ENCODE measurements at regions of chr16 and their contacts with region 1.

Region 1: DNA sequence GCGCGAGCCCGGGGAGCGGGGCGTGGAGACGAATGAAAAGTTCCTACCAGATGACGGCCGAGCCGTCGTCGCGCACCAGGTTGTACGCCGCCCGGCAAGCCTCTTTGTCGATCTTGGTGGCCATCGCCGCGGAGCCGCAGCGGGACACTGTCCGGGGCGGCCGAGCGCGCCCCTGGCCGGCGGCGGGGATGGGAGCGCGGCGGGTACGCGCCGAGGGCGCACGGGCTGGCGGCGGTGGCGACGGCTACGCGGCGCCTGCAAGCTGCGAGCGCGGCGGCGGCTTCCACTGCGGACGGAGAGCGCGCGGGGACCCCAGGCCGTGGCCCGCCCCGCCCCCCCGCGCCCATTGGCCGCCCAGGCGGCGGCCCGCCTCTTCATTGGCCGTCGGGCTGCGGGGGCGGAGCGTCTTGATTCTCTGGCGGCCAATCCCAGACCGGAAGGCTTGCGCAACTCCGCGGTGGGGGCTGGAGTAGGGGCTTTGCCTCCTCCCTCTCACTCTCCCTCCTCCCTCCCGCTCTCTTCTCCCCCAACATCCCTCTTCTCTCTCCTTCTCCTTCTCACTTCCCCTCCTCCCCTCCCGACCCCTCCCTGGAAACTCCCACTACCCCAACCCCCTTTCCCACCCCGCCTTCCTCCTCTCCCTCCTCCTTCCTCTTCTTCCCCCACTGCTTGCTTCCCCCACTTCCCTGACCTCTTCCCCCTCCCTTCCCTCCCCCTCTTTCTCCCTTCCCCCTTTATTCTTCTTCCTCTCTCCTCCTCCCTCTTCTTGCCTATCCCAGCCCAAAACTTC is at the start of gene COTL1:
- DNase-seq: peak; percentile 83
- H3K4me3 ChIP-seq: peak within 1 kb of the TSS; percentile 86
- H3K27me3 ChIP-seq: no peaks in the 10 kb centered on the region
- CTCF ChIP-seq: no peak
- polyA plus RNA-seq, gene COTL1: 161 and 166 TPM in 2 replicates

Region 2: GRCh38 chr16:84504420-84505248 is 113.4 kb before region 1 on chr16 and contains the start of gene MEAK7:
- CTCF ChIA-PET with region 1: interaction called, 169 read pairs
- POLR2A ChIA-PET with region 1: no interaction called
- DNase-seq: peak; percentile 83
- H3K4me3 ChIP-seq: peak within 1 kb of the TSS; percentile 67
- H3K27me3 ChIP-seq: no peaks in the 10 kb centered on the region
- CTCF ChIP-seq: no peak
- polyA plus RNA-seq, gene MEAK7: 29.1 and 41.2 TPM in 2 replicates

Region 3: GRCh38 chr16:84518748-84519341 is 99.1 kb before region 1 on chr16:
- CTCF ChIA-PET with region 1: interaction called, 169 read pairs
- POLR2A ChIA-PET with region 1: no interaction called
- DNase-seq: no peak
- H3K4me3 ChIP-seq: no peak overlapping the region
- H3K27me3 ChIP-seq: no peaks in the 10 kb centered on the region
- CTCF ChIP-seq: no peak

Region 4: GRCh38 chr16:84633622-84634021 is 15.6 kb after region 1 on chr16:
- CTCF ChIA-PET with region 1: interaction called, 13 read pairs
- POLR2A ChIA-PET with region 1: no interaction called
- DNase-seq: no peak
- H3K4me3 ChIP-seq: no peak overlapping the region
- H3K27me3 ChIP-seq: no peaks in the 10 kb centered on the region
- CTCF ChIP-seq: no peak

Region 5: GRCh38 chr16:84647828-84648594 is 30.0 kb after region 1 on chr16 and contains the start of gene KLHL36:
- CTCF ChIA-PET with region 1: interaction called, 13 read pairs
- POLR2A ChIA-PET with region 1: interaction called, 3 read pairs
- DNase-seq: no peak
- H3K4me3 ChIP-seq: peak within 1 kb of the TSS; percentile 82
- H3K27me3 ChIP-seq: no peaks in the 10 kb centered on the region
- CTCF ChIP-seq: no peak
- polyA plus RNA-seq, gene KLHL36: 33.2 and 43.7 TPM in 2 replicates

Region 6: GRCh38 chr16:84738255-84739038 is 120.5 kb after region 1 on chr16:
- CTCF ChIA-PET with region 1: interaction called, 35 read pairs
- POLR2A ChIA-PET with region 1: no interaction called
- DNase-seq: no peak
- H3K4me3 ChIP-seq: no peak overlapping the region
- H3K27me3 ChIP-seq: no peaks in the 10 kb centered on the region
- CTCF ChIP-seq: peak; percentile 87

Region 7: GRCh38 chr16:84746882-84747281 is 128.9 kb after region 1 on chr16:
- CTCF ChIA-PET with region 1: interaction called, 10 read pairs
- POLR2A ChIA-PET with region 1: no interaction called
- DNase-seq: no peak
- H3K4me3 ChIP-seq: no peak overlapping the region
- H3K27me3 ChIP-seq: no peaks in the 10 kb centered on the region
- CTCF ChIP-seq: peak; percentile 34

Measured in BJ (cell line).